ENCODE measurements at regions of chr1 and their contacts with region 1.

Region 1: GRCh38 chr1:230867903-230868735 is at the start of gene C1orf198:
- DNase-seq: peak; percentile 78
- H3K4me3 ChIP-seq: peak within 1 kb of the TSS; percentile 92 to 94
- H3K27ac ChIP-seq: peak within 1 kb of the TSS; percentile 73 to 81
- H3K4me1 ChIP-seq: no peaks in the 10 kb centered on the region
- H3K27me3 ChIP-seq: no peaks in the 10 kb centered on the region
- CTCF ChIP-seq: peak in 1 of 4 experiments; percentile 7
- POLR2A ChIP-seq: peak; percentile 75
- total RNA-seq, gene C1orf198: 41.9 to 44.8 TPM

Region 2: DNA sequence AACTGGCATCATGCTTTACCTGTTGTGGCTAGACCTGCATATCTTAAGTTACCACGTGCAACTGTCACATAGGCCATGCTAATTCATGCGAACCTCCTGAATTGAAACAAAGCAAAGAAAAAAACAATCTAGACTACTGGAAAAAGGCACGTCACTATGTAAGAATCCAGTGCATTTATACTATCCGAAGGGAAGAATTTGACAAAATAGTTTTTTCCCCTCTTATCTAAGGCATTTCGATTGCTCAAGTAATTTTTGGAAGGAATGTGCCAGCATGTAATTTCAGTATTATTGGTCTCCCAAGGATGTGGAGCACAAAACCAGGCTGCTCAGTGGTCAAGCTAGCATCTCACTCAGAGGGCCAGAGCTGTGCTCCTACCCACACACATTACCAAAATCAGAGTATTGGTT is 31.7 kb after region 1 on chr1:
- intact Hi-C with region 1: loop called (anchors 5 kb)
- DNase-seq: no peak
- H3K4me3 ChIP-seq: no peak overlapping the region
- H3K27ac ChIP-seq: no peak overlapping the region
- H3K4me1 ChIP-seq: no peaks in the 10 kb centered on the region
- H3K27me3 ChIP-seq: no peaks in the 10 kb centered on the region
- CTCF ChIP-seq: no peak
- POLR2A ChIP-seq: no peak

Region 3: GRCh38 chr1:230978491-230979388 is 110.6 kb after region 1 on chr1 and contains the starts of genes ARV1 and TTC13:
- intact Hi-C with region 1: no loop called
- DNase-seq: peak; percentile 98
- H3K4me3 ChIP-seq: peak within 1 kb of the TSS; percentile 72 to 74
- H3K27ac ChIP-seq: peak within 1 kb of the TSS; percentile 45 to 52
- H3K4me1 ChIP-seq: peaks cover 4% of the 10 kb centered on the region
- H3K27me3 ChIP-seq: no peaks in the 10 kb centered on the region
- CTCF ChIP-seq: peak; percentile 7 to 35 (median 30)
- POLR2A ChIP-seq: peak; percentile 48
- total RNA-seq, gene ARV1: 27.6 to 29.6 TPM
- total RNA-seq, gene TTC13: 12.1 to 12.2 TPM

Measured in prostate gland (tissue), 2 donors.